Mammary epithelial cell (primary cell): ENCODE measurements at regions of chr1 and their contacts with region 1.

Region 1: GRCh38 chr1:89358287-89358893 is 5.5 kb upstream of the GBP6 start:
- DNase-seq: peak; percentile 60
- H3K4me3 ChIP-seq: no peak overlapping the region
- H3K27ac ChIP-seq: no peak overlapping the region
- H3K4me1 ChIP-seq: peaks cover 9% of the 10 kb centered on the region
- H3K27me3 ChIP-seq: no peaks in the 10 kb centered on the region
- CTCF ChIP-seq: peak; percentile 59 to 86

Region 2: DNA sequence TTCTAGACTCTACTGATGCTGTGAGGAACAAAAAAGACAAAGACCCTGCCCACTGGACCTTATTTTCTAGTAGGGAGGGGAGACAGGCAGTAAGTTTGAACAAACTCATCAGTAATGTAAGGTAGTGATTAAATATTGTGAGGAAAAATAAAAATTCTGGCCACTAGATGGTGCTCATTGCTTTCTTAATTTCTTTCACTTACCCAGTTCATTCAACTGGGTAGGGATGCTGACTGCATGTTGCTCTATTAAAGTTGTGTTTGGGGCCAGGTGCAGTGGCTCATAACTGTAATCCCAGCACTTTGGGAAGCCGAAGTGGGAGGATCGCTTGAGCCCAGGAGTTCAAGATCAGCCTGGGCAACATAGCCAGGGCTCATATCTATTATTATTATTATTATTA is 359.7 kb before region 1 on chr1:
- CTCF ChIA-PET with region 1: no interaction called
- dilution Hi-C with region 1: no loop called
- in situ Hi-C with region 1: loop called in 1 of 2 experiments (anchors 5 kb)
- intact Hi-C with region 1: loop called (anchors 1 kb)
- DNase-seq: peak; percentile 60
- H3K4me3 ChIP-seq: no peak overlapping the region
- H3K27ac ChIP-seq: no peak overlapping the region
- H3K4me1 ChIP-seq: peaks cover 12% of the 10 kb centered on the region
- H3K27me3 ChIP-seq: no peaks in the 10 kb centered on the region
- CTCF ChIP-seq: peak; percentile 19 to 49

Region 3: DNA sequence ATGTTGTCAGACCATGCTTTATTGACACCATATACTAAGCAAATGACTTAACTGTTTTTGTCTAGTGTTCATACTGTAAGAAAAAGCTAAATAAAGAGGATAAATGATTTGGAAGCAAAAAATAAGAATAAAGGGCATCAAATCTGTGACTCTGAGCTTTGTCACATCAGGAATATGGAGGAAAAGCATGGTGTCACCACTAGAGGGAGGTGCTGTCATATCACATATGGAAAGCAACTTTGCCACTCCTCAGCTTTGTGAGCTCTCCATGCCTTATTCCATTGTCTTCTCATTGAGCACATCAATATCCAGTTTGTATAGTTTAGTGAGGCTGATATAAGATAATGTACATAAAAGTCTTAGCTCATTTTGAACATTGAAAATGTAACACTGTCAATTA is 272.6 kb before region 1 on chr1:
- CTCF ChIA-PET with region 1: interaction called, 3 read pairs
- dilution Hi-C with region 1: no loop called
- in situ Hi-C with region 1: no loop called
- intact Hi-C with region 1: loop called (anchors 1 kb)
- DNase-seq: peak; percentile 27
- H3K4me3 ChIP-seq: no peak overlapping the region
- H3K27ac ChIP-seq: no peak overlapping the region
- H3K4me1 ChIP-seq: no peaks in the 10 kb centered on the region
- H3K27me3 ChIP-seq: no peaks in the 10 kb centered on the region
- CTCF ChIP-seq: peak; percentile 80 to 86

Region 4: DNA sequence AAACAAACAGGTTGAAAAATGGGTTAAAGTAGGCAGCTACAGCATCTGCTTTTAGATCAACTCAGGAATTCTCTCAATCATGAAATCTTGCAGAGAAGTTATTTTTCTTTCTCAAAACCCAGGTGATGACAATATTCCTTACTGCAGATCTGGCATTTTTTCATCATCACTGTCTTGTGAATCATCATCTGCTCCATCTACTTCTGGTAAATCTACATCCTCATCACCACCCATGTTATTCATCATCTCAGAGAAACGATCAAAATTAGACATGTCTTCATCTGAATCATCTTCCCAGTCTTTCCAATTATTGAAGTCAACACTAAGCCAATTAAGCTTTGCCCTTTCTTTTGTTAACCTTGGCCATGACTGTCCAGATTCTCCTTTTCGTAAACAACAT is 254.2 kb before region 1 on chr1:
- CTCF ChIA-PET with region 1: no interaction called
- dilution Hi-C with region 1: no loop called
- in situ Hi-C with region 1: loop called in 1 of 2 experiments (anchors 10 kb)
- intact Hi-C with region 1: no loop called
- DNase-seq: peak; percentile 14
- H3K4me3 ChIP-seq: no peak overlapping the region
- H3K27ac ChIP-seq: no peak overlapping the region
- H3K4me1 ChIP-seq: no peaks in the 10 kb centered on the region
- H3K27me3 ChIP-seq: peaks cover 11% of the 10 kb centered on the region
- CTCF ChIP-seq: no peak

Region 5: GRCh38 chr1:89274411-89274857 is 84.0 kb before region 1 on chr1:
- CTCF ChIA-PET with region 1: interaction called, 3 read pairs
- dilution Hi-C with region 1: no loop called
- in situ Hi-C with region 1: no loop called
- intact Hi-C with region 1: loop called (anchors 10 kb)
- DNase-seq: peak; percentile 79
- H3K4me3 ChIP-seq: no peak overlapping the region
- H3K27ac ChIP-seq: no peak overlapping the region
- H3K4me1 ChIP-seq: peaks cover 6% of the 10 kb centered on the region
- H3K27me3 ChIP-seq: no peaks in the 10 kb centered on the region
- CTCF ChIP-seq: no peak

Region 6: DNA sequence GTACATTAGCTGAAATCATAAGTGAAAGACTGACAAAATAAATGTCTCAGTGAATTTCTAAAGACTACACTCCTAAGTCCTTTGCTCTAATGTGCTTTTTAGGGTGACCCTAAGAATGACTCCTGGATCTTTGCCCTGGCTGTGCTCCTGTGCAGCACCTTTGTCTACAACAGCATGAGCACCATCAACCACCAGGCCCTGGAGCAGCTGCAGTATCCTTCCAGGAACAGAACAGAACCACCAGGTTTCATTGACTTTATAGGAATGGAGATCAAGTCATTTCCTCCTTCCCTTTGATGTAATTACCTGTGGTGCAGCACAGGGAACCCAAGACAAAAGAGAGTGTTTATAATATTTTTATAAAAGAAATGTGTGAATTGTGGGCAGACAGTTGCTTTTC is 19.6 kb after region 1 on chr1:
- CTCF ChIA-PET with region 1: no interaction called
- dilution Hi-C with region 1: no loop called
- in situ Hi-C with region 1: no loop called
- intact Hi-C with region 1: no loop called
- DNase-seq: no peak
- H3K4me3 ChIP-seq: no peak overlapping the region
- H3K27ac ChIP-seq: no peak overlapping the region
- H3K4me1 ChIP-seq: no peaks in the 10 kb centered on the region
- H3K27me3 ChIP-seq: no peaks in the 10 kb centered on the region
- CTCF ChIP-seq: no peak

Region 7: DNA sequence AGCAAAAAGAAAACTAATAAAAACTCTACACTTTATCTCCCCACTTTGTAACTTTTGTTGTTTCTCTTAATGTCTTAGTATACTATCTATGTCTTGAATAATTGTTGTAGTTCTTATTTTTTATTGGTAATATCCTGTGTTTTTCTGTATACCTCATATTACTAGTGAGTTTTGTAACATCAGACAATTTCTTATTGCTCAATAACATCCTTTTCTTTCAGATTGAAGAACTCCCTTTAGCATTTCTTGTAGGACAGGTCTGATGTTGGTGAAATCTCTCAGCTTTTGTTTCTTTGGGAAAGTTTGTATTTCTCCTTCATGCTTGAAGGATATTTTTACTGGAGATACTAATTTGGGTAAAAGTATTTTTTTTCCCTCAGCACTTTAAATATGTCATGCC is 86.4 kb after region 1 on chr1:
- CTCF ChIA-PET with region 1: no interaction called
- dilution Hi-C with region 1: loop called (anchors 5 kb)
- in situ Hi-C with region 1: no loop called
- intact Hi-C with region 1: no loop called
- DNase-seq: no peak
- H3K4me3 ChIP-seq: no peak overlapping the region
- H3K27ac ChIP-seq: no peak overlapping the region
- H3K4me1 ChIP-seq: no peaks in the 10 kb centered on the region
- H3K27me3 ChIP-seq: no peaks in the 10 kb centered on the region
- CTCF ChIP-seq: no peak

Region 8: GRCh38 chr1:89454845-89455521 is 96.6 kb after region 1 on chr1:
- CTCF ChIA-PET with region 1: interaction called, 3 read pairs
- dilution Hi-C with region 1: no loop called
- in situ Hi-C with region 1: loop called in 1 of 2 experiments (anchors 5 kb)
- intact Hi-C with region 1: loop called (anchors 1 kb)
- DNase-seq: peak; percentile 66
- H3K4me3 ChIP-seq: no peak overlapping the region
- H3K27ac ChIP-seq: peak overlapping the region; percentile 36
- H3K4me1 ChIP-seq: peaks cover 39% of the 10 kb centered on the region
- H3K27me3 ChIP-seq: no peaks in the 10 kb centered on the region
- CTCF ChIP-seq: peak; percentile 50 to 64

Region 9: GRCh38 chr1:89771991-89772560 is 413.7 kb after region 1 on chr1:
- CTCF ChIA-PET with region 1: no interaction called
- dilution Hi-C with region 1: no loop called
- in situ Hi-C with region 1: no loop called
- intact Hi-C with region 1: no loop called
- DNase-seq: no peak
- H3K4me3 ChIP-seq: no peak overlapping the region
- H3K27ac ChIP-seq: no peak overlapping the region
- H3K4me1 ChIP-seq: peaks cover 10% of the 10 kb centered on the region
- H3K27me3 ChIP-seq: peaks cover 2% of the 10 kb centered on the region
- CTCF ChIP-seq: no peak